ENCODE measurements at regions of chr14 and their contacts with region 1.

Region 1: DNA sequence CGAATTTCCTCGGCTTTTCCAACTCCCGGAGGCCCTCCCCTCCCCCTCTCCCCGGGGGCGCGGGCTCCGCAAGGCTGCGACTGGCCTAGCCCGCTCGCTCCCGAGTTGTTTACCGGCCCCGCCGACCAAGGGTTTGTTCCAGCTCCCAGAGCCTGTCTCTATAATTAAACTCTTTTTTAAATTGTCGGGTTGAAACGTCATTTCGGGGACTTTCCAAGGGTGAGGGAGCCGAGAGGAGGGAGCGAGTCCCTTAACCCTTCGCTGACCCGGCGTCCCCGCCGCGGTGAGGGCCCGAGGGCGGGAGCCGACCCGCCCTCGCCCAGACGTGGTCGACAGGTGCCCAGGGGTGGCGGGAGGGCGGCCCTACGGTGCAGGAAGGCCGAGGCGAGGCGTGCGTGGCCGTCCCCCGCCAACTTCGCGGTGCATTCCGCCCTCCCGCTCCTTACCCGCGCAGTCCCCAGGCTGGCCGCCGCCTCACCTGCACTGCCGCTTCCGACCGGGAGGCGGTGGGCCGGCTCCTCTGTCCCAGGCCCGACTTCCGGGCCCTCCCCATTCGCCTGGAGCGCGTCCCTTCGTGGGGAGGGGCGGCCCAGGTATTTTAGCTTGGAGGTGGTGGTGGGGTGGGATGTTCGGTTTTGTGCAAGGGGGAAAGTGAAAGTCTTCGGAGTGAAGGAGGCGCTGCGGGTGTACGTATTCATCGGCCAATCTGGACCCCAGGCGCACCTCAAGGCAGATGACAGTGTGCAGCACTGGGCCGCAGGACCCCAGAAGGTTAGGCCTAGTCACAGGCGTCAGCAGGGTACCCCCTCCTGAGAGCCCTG is 2.9 kb upstream of the ZFP36L1 start:
- DNase-seq: peak; percentile 93

Region 2: GRCh38 chr14:68401855-68402254 is 394.0 kb before region 1 on chr14:
- intact Hi-C with region 1: loop called (anchors 5 kb)
- DNase-seq: no peak

Region 3: DNA sequence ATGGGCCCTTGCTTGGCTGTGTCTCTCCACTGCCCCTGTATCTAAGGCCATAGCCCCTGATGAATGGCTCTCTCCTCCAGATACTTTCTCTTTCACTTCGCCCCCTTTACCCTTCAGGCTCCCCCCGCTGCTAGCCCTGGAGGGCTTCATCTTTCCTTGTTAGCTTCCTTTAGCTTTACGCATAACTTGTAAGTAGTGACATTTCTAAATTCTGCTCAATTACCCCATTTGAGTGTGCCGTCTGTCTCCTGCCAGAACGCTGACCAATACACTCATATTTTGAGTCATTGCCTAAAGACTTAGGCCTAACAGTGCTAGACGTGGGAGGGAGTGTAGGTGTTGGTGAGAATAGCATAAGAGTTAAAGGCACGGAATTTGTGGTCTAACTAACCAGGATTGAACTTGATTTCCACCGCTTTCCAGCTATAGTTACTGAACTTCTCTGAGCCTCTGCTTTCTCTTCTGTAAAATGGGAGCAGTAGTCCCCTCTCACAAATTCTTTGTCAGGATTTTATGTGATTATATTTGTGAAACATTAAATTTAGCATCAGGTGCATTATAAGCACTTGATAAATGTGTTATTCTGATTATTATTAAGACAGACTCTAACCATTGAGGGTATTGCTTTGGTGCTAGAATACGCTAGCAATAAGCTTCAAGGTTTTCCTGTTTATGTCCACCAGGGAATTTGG is 132.3 kb before region 1 on chr14:
- intact Hi-C with region 1: loop called (anchors 5 kb)
- DNase-seq: no peak

Region 4: DNA sequence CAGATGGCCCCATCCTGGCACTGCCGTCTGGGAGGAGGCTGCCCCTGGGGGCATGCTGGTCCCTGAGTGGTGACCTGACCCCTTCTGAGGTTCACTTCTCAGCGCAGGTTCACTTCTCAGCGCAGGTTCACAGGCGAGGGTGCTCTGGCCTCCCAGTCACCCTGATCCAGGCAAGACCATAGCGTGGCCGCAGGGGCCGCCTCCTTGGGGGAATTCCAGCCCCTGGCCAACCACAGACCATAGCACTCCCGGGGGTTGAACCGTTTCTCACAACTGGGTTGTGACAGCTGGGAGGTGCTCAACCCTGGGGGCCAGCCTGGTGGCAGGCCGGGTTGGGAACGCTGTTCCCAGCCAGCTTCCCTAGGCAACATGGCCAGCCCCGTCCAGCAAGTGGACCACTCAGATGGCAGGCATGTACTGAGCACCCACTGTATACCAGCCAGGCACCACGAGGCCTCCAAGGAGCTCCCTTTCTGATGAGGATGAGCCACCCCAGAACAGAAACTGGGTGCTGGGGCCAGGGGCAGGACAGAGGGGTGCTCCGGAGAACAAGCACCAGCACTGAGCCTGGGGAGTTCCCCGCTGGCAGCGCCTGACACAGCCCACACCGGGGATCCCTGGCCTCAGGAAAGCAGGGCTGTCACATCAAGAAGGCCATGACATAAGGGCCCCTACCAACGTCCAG is 25.3 kb after region 1 on chr14:
- intact Hi-C with region 1: no loop called
- DNase-seq: no peak

Measured in cardiac septum (tissue), 1 donor.